Ascending aorta (tissue), 2 donors: ENCODE measurements at regions of chr7 and their contacts with region 1.

Region 1: GRCh38 chr7:2555121-2556052 is at the start of gene BRAT1:
- DNase-seq: peak; percentile 84 to 98
- H3K4me3 ChIP-seq: peak within 1 kb of the TSS; percentile 67 to 75
- H3K27ac ChIP-seq: peak within 1 kb of the TSS; percentile 95 to 99
- H3K4me1 ChIP-seq: peaks cover 0 to 20% of the 10 kb centered on the region in 2 donors
- H3K27me3 ChIP-seq: no peaks in the 10 kb centered on the region
- CTCF ChIP-seq: peak in 1 of 3 experiments; percentile 49
- total RNA-seq, gene BRAT1: 84.0 TPM

Region 2: GRCh38 chr7:2403014-2403717 is 152.2 kb before region 1 on chr7 and contains the start of gene CHST12:
- intact Hi-C with region 1: loop called (anchors 5 kb)
- DNase-seq: peak; percentile 73 to 96
- H3K4me3 ChIP-seq: peak within 1 kb of the TSS; percentile 99
- H3K27ac ChIP-seq: peak within 1 kb of the TSS; percentile 66 to 78
- H3K4me1 ChIP-seq: peaks cover 14 to 29% of the 10 kb centered on the region in 2 donors
- H3K27me3 ChIP-seq: no peaks in the 10 kb centered on the region
- CTCF ChIP-seq: no peak
- total RNA-seq, gene CHST12: 79.4 TPM

Region 3: GRCh38 chr7:2482725-2483451 is 72.5 kb before region 1 on chr7:
- intact Hi-C with region 1: loop called (anchors 5 kb)
- DNase-seq: no peak
- H3K4me3 ChIP-seq: no peak overlapping the region
- H3K27ac ChIP-seq: no peak overlapping the region
- H3K4me1 ChIP-seq: peaks cover 12 to 20% of the 10 kb centered on the region in 2 donors
- H3K27me3 ChIP-seq: no peaks in the 10 kb centered on the region
- CTCF ChIP-seq: no peak

Region 4: GRCh38 chr7:2508327-2509215 is 46.8 kb before region 1 on chr7:
- intact Hi-C with region 1: no loop called
- DNase-seq: no peak
- H3K4me3 ChIP-seq: no peak overlapping the region
- H3K27ac ChIP-seq: no peak overlapping the region
- H3K4me1 ChIP-seq: peaks cover 0 to 4% of the 10 kb centered on the region in 2 donors
- H3K27me3 ChIP-seq: no peaks in the 10 kb centered on the region
- CTCF ChIP-seq: no peak

Region 5: DNA sequence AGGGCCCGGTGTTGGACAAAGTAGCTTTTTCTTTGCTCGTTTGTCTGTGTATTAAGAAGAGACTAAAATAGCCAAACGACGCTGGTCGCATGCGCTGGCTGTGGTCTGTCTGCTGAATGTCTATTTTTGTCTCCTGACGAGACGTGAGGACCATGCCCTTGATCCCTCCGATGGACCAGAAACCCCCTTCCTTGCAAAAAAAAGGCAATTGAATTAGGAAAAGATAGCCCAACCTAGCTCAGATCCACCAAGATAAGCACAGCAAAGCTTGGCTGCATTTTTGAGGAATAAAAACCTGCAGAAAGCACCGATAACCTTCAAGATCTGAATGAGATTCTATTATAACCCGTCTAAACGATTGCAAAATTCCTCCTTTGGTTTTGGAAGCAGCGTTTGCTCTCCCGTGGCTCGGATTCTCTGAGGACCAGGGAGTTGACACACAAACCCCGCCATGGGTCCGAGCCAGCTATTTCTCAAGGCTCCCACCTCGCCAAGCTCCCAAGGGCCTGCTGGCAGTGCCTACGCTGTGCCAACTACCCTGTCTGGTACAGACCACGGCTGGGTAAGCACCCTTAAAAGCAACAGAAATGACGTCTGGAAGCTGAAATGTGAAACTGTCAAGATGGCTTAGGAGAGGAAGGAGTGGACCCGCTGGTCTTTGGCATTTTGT is 58.7 kb after region 1 on chr7:
- intact Hi-C with region 1: loop called (anchors 5 kb)
- DNase-seq: peak; percentile 75 to 95
- H3K4me3 ChIP-seq: peak overlapping the region in 1 of 2 donors; percentile 54
- H3K27ac ChIP-seq: peak overlapping the region; percentile 66 to 95
- H3K4me1 ChIP-seq: peaks cover 17 to 40% of the 10 kb centered on the region in 2 donors
- H3K27me3 ChIP-seq: no peaks in the 10 kb centered on the region
- CTCF ChIP-seq: no peak